ENCODE measurements at regions of chr18 and their contacts with region 1.

Region 1: DNA sequence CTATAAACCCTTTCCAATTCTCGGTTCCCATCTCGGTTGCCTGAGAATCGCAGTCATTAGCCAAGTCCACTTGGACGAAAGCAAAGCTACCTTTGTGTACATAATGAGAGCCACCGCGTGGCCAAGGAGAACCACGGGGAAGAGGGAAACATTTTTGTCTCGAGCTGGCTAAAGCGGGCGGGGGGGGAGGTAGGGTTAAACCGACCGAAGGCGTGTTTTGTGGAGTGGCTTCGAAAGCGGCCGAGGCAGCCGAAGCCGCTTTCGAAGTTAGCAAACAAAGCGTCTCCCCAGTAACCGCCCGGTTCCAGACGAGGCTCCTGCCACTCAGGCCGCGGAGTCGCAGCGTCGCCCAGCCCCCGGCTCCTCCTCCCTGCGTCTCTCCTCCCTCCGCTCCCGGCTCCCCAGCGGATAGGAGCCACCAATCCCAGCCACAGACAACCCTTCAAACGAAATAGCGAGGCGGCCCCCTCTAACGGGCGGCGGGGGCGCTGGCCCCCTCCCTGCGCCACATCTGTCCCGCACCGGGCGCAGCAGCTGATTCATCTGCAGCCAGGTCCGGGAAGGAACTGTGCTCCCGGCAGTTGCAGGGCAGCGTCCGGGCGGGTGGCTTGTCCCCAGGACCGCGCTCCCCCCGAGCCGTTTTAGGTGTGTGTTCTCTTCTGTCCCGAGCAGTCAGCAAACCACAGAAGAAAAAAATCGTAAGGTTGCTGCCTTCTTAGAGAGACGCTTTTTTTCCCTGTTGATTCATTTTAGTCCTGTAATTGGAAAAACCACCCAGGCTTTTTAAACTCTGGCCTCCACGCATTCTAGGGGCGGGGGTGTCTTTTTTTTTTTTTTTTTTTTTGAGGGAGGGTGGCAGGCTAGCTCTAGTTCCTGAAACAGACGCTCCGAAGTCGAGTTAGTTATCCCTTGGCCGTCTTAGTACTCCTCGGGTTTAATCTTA is 1.8 kb upstream of the TGIF1 start:
- DNase-seq: peak; percentile 96 to 99
- H3K4me3 ChIP-seq: peak overlapping the region; percentile 72 to 89
- H3K27ac ChIP-seq: peak overlapping the region; percentile 98 to 99
- H3K4me1 ChIP-seq: peaks cover 0 to 17% (median 11%) of the 10 kb centered on the region in 4 donors
- H3K27me3 ChIP-seq: no peaks in the 10 kb centered on the region
- CTCF ChIP-seq: no peak

Region 2: GRCh38 chr18:3261371-3262246 is 186.6 kb before region 1 on chr18 and contains the start of gene MYL12B:
- intact Hi-C with region 1: loop called (anchors 5 kb)
- DNase-seq: peak; percentile 75 to 88
- H3K4me3 ChIP-seq: peak within 1 kb of the TSS; percentile 95 to 98
- H3K27ac ChIP-seq: peak within 1 kb of the TSS; percentile 92 to 93
- H3K4me1 ChIP-seq: peaks cover under 1 to 79% (median 52%) of the 10 kb centered on the region in 4 donors
- H3K27me3 ChIP-seq: no peaks in the 10 kb centered on the region
- CTCF ChIP-seq: no peak

Region 3: GRCh38 chr18:3593904-3594661 is 145.9 kb after region 1 on chr18:
- intact Hi-C with region 1: loop called (anchors 2 kb)
- DNase-seq: peak; percentile 90 to 93
- H3K4me3 ChIP-seq: peak overlapping the region; percentile 47 to 57
- H3K27ac ChIP-seq: peak overlapping the region; percentile 88 to 90
- H3K4me1 ChIP-seq: peaks cover 0 to 50% (median 42%) of the 10 kb centered on the region in 4 donors
- H3K27me3 ChIP-seq: no peaks in the 10 kb centered on the region
- CTCF ChIP-seq: peak; percentile 83 to 92

Region 4: DNA sequence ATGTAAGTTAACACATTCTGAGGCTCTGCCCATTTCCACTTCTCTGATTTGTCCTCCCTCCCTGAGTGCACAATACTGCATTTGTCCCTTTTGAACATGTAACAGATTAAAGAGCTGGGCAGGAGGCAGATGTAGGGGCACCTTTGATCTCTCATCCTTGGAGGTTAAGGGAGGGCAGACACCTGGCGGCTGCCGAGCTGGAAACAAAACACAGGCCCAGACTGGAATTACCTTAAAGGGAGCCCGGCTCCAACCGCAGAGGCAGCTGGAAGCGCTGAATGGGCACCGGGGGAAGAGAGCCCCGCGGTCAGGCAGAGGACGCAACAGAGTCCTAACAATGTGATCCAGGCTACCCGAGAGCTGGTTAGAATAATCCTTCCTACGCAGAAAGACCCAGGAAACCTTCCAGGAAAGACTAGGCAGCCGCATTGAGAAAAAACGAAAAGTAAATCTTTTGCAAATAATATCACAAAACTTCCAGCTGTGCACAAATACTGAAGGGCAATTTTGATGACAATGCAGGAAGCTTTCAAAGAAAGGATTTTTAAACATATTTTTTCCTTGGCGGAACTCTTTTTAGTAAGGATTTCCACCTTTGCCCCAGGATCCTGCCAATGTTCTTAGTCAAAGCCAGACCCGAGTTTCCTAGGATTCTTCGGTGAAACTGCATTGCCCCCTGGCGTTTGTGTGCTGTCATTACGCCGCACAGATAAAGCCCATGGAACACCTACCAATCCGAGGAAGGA is 217.8 kb after region 1 on chr18:
- intact Hi-C with region 1: loop called (anchors 10 kb)
- DNase-seq: peak; percentile 68 to 88
- H3K4me3 ChIP-seq: peak overlapping the region; percentile 16 to 33
- H3K27ac ChIP-seq: peak overlapping the region; percentile 31 to 37
- H3K4me1 ChIP-seq: peaks cover 0 to 6% (median 4%) of the 10 kb centered on the region in 4 donors
- H3K27me3 ChIP-seq: no peaks in the 10 kb centered on the region
- CTCF ChIP-seq: peak; percentile 91 to 96

Region 5: DNA sequence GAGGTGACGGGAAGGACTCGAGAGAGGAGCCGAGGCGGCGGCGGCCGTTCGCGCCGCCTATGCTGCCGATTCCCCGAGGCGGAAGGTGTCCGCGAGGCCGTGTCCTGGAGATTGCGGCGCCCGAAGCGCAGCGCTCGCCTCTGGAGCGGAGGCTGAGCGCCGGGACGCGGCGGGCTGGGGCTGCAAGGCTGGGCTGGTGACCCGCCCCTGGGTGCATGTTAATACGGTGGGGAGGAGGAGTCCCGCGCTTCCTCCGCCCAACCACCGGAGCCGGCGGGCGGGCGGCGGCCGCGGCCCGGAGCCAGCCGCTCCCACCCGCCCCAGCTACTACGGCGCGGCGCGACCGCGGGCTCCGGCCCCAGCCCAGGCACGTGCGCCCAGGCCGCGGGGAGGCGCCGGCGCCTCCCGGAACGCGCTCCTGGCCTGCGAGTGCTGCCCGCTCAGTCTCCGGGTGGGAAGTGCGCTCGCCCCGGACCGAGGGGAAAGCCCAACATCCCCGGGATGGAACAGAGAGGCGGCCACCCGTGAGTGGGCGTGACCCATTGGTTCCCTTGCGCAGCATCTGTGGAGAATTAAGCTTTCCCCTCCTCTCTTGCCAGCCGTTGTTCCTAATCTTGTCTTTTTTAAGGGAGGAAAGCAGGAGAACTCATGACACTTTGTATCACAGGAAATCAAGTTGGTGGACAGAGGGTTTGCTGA is 1007.1 kb after region 1 on chr18 and contains the start of gene DLGAP1:
- intact Hi-C with region 1: loop called (anchors 10 kb)
- DNase-seq: peak; percentile 25 to 83
- H3K4me3 ChIP-seq: peak within 1 kb of the TSS; percentile 60 to 71
- H3K27ac ChIP-seq: peak within 1 kb of the TSS; percentile 66 to 72
- H3K4me1 ChIP-seq: peaks cover 0 to 29% (median 6%) of the 10 kb centered on the region in 4 donors
- H3K27me3 ChIP-seq: no peaks in the 10 kb centered on the region
- CTCF ChIP-seq: no peak